CD8-positive, alpha-beta T cell (primary cell): ENCODE measurements at regions of chr19 and their contacts with region 1.

Region 1: DNA sequence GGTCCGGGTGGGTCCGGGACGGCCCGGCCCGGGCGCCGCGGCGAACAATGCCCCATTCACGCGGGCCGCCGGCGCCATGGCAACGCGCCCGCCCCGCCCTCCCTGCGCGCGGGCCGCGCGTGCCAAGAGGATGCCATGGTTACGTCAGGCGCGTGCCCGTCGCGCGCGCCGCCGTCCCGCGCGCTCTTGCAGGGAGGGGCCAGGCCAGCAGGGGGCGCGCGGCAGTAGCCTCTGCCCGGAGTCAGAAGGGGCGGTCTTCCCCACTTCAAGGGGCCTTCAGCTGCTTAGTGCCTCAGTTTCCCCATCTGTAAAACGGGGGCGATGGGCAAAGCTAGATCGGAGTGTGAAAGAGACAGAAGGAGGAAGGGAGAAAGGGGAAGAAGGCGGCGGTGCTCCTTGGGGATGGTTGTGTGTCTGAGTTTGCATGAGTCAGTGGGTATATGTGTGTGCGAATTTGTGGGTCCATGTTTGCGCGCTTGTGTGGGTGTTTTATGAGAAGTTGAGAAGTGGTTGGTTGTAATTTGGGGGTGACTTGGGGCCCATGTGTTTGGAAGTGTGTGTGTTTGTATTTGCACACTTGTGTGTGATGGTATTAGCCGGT is 11.6 kb upstream of the NFIX start:
- DNase-seq: peak; percentile 64 to 90 (median 81)
- ATAC-seq: peak; percentile 77
- H3K4me3 ChIP-seq: no peak overlapping the region
- H3K4me3 Mint-ChIP-seq: no peak overlapping the region
- H3K27ac ChIP-seq: peak overlapping the region in 1 of 2 experiments; percentile 20
- H3K27ac Mint-ChIP-seq: no peak overlapping the region
- H3K4me1 ChIP-seq: peaks cover 15% of the 10 kb centered on the region
- H3K4me1 Mint-ChIP-seq: peaks cover 8% of the 10 kb centered on the region
- H3K27me3 ChIP-seq: peaks cover 3 to 25% of the 10 kb centered on the region in 2 experiments
- H3K27me3 Mint-ChIP-seq: peaks cover 3% of the 10 kb centered on the region
- CTCF ChIP-seq: peak; percentile 87

Region 2: DNA sequence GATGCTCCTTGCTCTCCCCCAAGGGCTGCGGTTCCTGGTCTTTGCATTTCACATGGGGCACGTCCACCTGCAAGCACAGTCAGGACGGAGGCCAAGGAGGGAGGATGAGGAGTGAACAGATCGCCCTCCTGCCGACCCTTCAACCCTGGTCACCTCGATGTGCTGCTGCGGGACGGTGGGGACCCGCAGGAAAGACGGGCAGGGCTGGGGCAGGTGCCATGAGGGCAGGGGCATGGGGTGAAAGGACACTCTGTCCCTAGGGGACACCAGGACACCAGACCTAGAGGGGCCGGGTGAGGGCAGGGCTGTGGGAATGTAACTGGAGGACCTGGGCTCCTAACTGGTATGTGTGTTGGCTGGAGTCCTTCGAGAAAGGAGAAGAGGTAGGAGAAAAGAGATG is 65.4 kb before region 1 on chr19:
- CTCF ChIA-PET with region 1: no interaction called
- POLR2A ChIA-PET with region 1: no interaction called
- intact Hi-C with region 1: no loop called
- DNase-seq: no peak
- ATAC-seq: no peak
- H3K4me3 ChIP-seq: no peak overlapping the region
- H3K4me3 Mint-ChIP-seq: peak overlapping the region; percentile 35
- H3K27ac ChIP-seq: no peak overlapping the region
- H3K27ac Mint-ChIP-seq: no peak overlapping the region
- H3K4me1 ChIP-seq: peaks cover 27% of the 10 kb centered on the region
- H3K4me1 Mint-ChIP-seq: peaks cover 35% of the 10 kb centered on the region
- H3K27me3 ChIP-seq: no peaks in the 10 kb centered on the region
- H3K27me3 Mint-ChIP-seq: no peaks in the 10 kb centered on the region
- CTCF ChIP-seq: no peak

Region 3: DNA sequence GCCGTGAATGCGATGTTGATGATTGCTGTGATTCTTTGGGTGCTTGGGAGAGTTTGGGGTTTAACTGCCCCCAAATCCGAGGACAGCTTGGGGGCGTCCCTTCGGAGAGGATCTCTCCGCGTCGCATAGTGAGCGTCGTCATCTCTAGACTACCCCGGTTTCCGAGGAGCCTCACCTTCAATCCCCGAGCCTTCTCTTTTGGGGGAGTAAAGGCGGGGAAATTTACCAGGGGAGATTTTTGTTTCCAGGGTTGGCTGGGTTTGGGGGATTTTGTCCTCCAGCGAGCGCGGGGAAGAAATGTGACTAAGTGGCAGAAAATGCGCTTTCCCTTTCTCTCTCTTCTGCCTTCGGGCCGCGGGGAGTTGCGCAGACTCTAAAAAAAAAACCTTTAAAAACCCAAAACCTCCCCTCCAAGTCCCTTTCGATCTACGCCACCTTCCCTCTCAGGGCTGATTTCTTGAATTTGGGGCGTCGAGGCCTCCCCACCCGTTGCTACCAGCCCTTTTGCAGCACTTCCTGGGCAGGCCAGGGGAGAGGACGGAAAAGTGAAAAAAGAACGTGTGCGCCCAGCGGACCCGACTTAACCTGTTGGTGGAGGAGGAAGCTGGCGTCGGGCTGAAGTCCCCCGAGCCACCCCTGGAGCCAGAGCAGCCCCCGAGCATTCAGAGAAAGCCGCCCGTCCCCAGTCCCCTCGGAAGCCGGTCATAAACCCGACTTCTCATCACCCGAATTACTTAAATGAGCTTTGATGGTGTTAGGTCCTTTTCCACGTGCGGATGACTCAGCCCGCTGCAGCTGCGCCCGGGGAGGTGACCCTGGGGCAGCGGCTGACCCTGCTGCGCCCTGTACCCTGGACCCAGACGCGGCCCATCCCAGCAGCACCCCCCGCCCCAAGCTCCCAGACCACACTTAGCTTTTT is 29.3 kb after region 1 on chr19:
- CTCF ChIA-PET with region 1: interaction called, 4 read pairs
- POLR2A ChIA-PET with region 1: no interaction called
- intact Hi-C with region 1: loop called in 1 of 2 experiments (anchors 1 kb)
- DNase-seq: peak in 6 of 9 experiments; percentile 23 to 64 (median 46)
- ATAC-seq: peak; percentile 62
- H3K4me3 ChIP-seq: peak overlapping the region; percentile 43 to 44
- H3K4me3 Mint-ChIP-seq: peak overlapping the region; percentile 87
- H3K27ac ChIP-seq: no peak overlapping the region
- H3K27ac Mint-ChIP-seq: peak overlapping the region; percentile 10
- H3K4me1 ChIP-seq: peaks cover 31% of the 10 kb centered on the region
- H3K4me1 Mint-ChIP-seq: peaks cover 25% of the 10 kb centered on the region
- H3K27me3 ChIP-seq: peaks cover 34 to 53% of the 10 kb centered on the region in 2 experiments
- H3K27me3 Mint-ChIP-seq: peaks cover 73% of the 10 kb centered on the region
- CTCF ChIP-seq: no peak

Region 4: GRCh38 chr19:13033819-13034611 is 50.4 kb after region 1 on chr19:
- CTCF ChIA-PET with region 1: no interaction called
- POLR2A ChIA-PET with region 1: no interaction called
- intact Hi-C with region 1: loop called (anchors 1 to 5 kb)
- DNase-seq: peak in 8 of 9 experiments; percentile 13 to 65 (median 50)
- ATAC-seq: peak; percentile 84
- H3K4me3 ChIP-seq: no peak overlapping the region
- H3K4me3 Mint-ChIP-seq: no peak overlapping the region
- H3K27ac ChIP-seq: no peak overlapping the region
- H3K27ac Mint-ChIP-seq: no peak overlapping the region
- H3K4me1 ChIP-seq: no peaks in the 10 kb centered on the region
- H3K4me1 Mint-ChIP-seq: no peaks in the 10 kb centered on the region
- H3K27me3 ChIP-seq: no peaks in the 10 kb centered on the region
- H3K27me3 Mint-ChIP-seq: no peaks in the 10 kb centered on the region
- CTCF ChIP-seq: peak; percentile 50

Region 5: GRCh38 chr19:13093407-13094105 is 109.9 kb after region 1 on chr19:
- CTCF ChIA-PET with region 1: interaction called, 138 read pairs
- POLR2A ChIA-PET with region 1: no interaction called
- intact Hi-C with region 1: loop called (anchors 1 kb)
- DNase-seq: peak; percentile 55 to 88 (median 80)
- ATAC-seq: peak; percentile 74
- H3K4me3 ChIP-seq: no peak overlapping the region
- H3K4me3 Mint-ChIP-seq: no peak overlapping the region
- H3K27ac ChIP-seq: no peak overlapping the region
- H3K27ac Mint-ChIP-seq: no peak overlapping the region
- H3K4me1 ChIP-seq: peaks cover 29% of the 10 kb centered on the region
- H3K4me1 Mint-ChIP-seq: peaks cover 18% of the 10 kb centered on the region
- H3K27me3 ChIP-seq: peaks cover 16 to 28% of the 10 kb centered on the region in 2 experiments
- H3K27me3 Mint-ChIP-seq: peaks cover 21% of the 10 kb centered on the region
- CTCF ChIP-seq: peak; percentile 92

Region 6: DNA sequence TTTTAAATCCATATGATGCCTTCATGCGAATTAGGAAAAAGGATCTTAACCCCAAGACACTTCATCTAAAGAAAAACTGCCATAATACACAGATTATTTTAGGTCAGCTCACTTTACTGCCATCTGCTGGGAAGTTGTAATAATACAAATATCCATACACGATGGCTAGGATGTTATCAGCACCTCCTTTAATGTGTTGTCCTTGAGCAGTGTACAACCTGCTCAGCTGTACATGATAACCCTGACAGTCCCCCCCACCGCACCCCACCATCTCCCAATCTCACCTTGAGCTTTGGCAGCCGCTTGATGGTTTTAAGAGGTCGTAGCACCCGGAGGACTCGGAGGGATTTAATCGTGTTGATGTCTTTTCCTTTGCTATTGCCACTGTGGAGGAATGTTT is 278.8 kb after region 1 on chr19:
- CTCF ChIA-PET with region 1: no interaction called
- POLR2A ChIA-PET with region 1: no interaction called
- intact Hi-C with region 1: loop called (anchors 1 kb)
- DNase-seq: peak in 2 of 9 experiments; percentile 61 to 72
- ATAC-seq: peak; percentile 59
- H3K4me3 ChIP-seq: no peak overlapping the region
- H3K4me3 Mint-ChIP-seq: no peak overlapping the region
- H3K27ac ChIP-seq: no peak overlapping the region
- H3K27ac Mint-ChIP-seq: no peak overlapping the region
- H3K4me1 ChIP-seq: no peaks in the 10 kb centered on the region
- H3K4me1 Mint-ChIP-seq: no peaks in the 10 kb centered on the region
- H3K27me3 ChIP-seq: no peaks in the 10 kb centered on the region
- H3K27me3 Mint-ChIP-seq: peaks cover 8% of the 10 kb centered on the region
- CTCF ChIP-seq: peak; percentile 79

Region 7: DNA sequence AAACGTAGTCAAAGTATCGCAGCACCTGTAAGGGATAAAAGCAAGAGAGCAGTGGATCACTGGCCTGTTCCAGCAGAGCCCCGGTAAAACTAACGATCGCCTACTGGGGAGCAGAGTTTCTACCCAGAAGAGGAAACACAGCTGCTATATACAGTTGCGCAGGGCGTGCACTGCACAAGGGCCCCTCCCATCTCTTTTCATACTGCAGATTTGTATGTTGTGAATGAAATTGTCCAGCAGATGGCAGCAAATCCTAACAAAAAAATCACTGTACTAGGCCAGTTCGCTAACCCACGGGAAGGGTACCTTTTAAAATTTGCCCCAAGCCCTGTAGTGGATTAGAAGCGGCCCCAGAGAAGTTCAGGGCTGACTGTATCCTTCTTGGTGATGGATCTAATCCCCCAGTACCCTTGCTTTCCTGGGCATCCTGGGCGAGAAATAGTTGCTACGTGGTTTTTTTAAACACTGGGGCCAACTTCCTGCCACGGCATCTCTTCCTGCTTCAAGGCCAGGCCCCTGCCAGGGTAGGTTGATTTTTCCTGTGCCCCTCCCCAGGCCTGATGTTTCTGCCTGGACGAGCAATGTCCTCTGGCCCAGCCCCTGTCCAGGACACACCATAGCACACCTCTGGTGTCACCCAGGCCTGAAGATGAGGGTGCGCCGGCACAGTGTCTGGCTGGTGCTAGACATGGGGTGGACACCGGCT is 293.6 kb after region 1 on chr19:
- CTCF ChIA-PET with region 1: no interaction called
- POLR2A ChIA-PET with region 1: no interaction called
- intact Hi-C with region 1: loop called in 1 of 2 experiments (anchors 1 kb)
- DNase-seq: peak; percentile 26 to 88 (median 59)
- ATAC-seq: peak; percentile 89
- H3K4me3 ChIP-seq: peak overlapping the region; percentile 23 to 31
- H3K4me3 Mint-ChIP-seq: peak overlapping the region; percentile 48
- H3K27ac ChIP-seq: peak overlapping the region in 1 of 2 experiments; percentile 75
- H3K27ac Mint-ChIP-seq: peak overlapping the region; percentile 84
- H3K4me1 ChIP-seq: peaks cover 7% of the 10 kb centered on the region
- H3K4me1 Mint-ChIP-seq: peaks cover 17% of the 10 kb centered on the region
- H3K27me3 ChIP-seq: no peaks in the 10 kb centered on the region
- H3K27me3 Mint-ChIP-seq: peaks cover 8% of the 10 kb centered on the region
- CTCF ChIP-seq: peak; percentile 77